ENCODE measurements at regions of chr14 and their contacts with region 1.

Region 1: DNA sequence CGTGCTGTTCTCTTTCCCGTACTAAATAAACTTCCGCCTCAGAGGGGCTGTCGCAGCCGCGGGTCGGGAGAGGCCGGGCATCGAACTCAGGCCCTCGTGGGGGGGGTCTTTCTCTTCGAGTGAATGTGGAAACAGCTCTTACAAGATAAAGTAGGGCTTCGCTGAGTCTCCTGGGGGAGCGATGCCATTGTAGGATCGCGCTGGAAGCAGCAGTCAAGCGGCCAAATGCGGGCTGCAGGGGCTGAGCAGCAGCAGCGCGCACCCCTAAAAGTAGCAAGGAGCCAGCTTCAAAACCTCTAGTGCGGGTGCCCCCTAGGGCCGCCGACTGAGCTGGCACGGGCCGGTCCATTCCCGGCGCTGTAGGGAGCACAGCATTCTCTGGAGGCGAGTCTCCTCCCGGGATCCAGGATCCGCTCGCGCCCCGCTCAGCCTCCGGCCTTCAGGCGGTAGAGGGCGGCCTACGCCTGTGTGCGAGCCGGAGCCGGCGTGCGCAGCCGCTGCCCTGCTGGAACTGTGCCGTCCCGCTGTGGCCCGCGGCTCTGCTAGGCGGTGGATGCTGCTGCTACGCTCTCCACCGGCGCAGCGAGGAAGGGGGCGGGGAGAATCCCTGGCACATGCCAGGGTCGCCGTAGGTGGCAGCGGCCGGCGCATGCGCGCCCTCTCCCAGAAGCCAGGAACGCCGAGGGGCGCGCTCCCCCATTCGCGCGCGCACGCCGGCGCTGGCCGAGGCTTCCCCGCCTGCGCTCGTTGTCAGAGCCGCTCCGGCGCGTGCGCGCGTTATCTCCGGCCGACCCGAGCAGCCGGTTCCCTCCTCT is at the start of gene FUT8:
- DNase-seq: peak; percentile 97
- ATAC-seq: peak; percentile 96
- total RNA-seq, gene FUT8: 15.7 TPM

Region 2: DNA sequence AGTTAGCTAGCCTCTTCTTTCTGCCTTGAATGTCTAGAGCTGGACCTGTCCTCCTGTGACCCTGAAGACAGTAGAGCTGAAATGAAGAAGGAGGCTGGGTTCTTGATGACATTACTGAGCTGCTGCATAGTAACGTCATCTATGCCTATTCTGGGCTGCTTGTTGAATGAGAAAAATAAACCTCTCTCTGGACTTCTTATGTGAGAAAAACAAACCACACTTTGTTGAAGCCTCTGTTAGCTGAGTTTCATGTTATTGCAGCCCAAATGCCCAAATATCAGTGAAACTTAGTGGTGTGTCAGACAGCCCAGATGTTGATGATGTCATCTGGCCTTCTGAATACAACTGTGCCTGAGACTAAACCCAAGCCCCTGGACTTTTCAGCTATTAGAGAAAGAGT is 242.9 kb before region 1 on chr14:
- intact Hi-C with region 1: loop called (anchors 5 kb)
- DNase-seq: no peak
- ATAC-seq: peak; percentile 75

Region 3: GRCh38 chr14:65604936-65605335 is 192.7 kb after region 1 on chr14:
- intact Hi-C with region 1: loop called (anchors 10 kb)
- DNase-seq: no peak
- ATAC-seq: no peak

Region 4: DNA sequence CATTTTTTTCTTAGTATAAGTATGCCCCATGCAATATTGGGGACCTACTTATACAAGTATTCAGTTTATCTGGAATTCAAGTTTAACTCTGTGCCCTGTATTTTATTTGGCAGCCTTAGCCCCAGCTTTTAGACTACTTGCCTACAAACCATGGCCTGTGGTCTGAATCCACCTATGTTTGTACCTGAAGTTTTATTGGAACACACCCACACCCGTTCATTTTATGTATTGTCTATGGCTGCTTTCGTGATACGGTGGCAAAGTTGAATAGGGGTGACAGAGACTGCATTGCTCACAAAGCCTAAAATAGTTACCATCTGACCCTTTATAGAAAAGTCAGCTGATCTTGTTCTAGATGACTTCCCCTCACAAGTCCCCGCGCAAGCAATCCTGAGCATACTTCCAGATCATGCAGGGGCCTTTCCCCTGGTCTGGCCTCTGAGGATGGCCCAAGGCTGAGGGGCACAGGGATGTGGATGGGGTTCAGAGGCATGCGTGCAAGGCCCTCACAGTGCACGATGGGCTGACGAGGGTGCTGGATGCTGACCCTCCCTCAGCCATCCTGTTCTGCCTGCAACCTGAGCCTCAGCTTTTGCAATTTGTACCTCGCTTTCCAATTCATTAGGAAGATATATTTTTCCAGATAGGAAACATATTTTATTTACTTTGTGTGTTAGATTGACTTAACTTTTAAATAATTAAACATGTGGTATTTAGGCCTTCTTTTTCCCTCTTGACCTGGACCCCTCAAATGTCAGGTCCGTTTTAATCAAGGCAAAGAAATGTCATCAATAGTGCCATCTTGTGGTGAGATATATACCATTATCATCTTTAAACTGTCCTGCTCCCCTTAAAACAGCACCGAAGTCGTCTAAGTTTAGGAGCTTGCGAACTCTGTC is 546.7 kb after region 1 on chr14:
- intact Hi-C with region 1: loop called (anchors 5 kb)
- DNase-seq: no peak
- ATAC-seq: peak; percentile 62

Measured in Right ventricle myocardium inferior (tissue), 1 donor.